ENCODE measurements at regions of chr1 and their contacts with region 1.

Region 1: GRCh38 chr1:165630629-165631341 is at the start of gene MGST3:
- DNase-seq: peak; percentile 97 to 99
- ATAC-seq: peak; percentile 92 to 96 (median 93)
- H3K4me3 ChIP-seq: peak within 1 kb of the TSS; percentile 95
- H3K27ac ChIP-seq: peak within 1 kb of the TSS; percentile 99
- H3K4me1 ChIP-seq: peaks cover 37% of the 10 kb centered on the region
- H3K27me3 ChIP-seq: no peaks in the 10 kb centered on the region
- CTCF ChIP-seq: no peak
- total RNA-seq, gene MGST3: 223 to 318 (median 258) TPM

Region 2: GRCh38 chr1:165376041-165376810 is 254.6 kb before region 1 on chr1:
- intact Hi-C with region 1: no loop called
- DNase-seq: peak; percentile 88 to 92
- ATAC-seq: peak; percentile 82 to 88 (median 88)
- H3K4me3 ChIP-seq: peak overlapping the region; percentile 63
- H3K27ac ChIP-seq: peak overlapping the region; percentile 73
- H3K4me1 ChIP-seq: peaks cover 10% of the 10 kb centered on the region
- H3K27me3 ChIP-seq: peaks cover 0 to 5% (median 0%) of the 10 kb centered on the region in 3 donors
- CTCF ChIP-seq: no peak

Region 3: DNA sequence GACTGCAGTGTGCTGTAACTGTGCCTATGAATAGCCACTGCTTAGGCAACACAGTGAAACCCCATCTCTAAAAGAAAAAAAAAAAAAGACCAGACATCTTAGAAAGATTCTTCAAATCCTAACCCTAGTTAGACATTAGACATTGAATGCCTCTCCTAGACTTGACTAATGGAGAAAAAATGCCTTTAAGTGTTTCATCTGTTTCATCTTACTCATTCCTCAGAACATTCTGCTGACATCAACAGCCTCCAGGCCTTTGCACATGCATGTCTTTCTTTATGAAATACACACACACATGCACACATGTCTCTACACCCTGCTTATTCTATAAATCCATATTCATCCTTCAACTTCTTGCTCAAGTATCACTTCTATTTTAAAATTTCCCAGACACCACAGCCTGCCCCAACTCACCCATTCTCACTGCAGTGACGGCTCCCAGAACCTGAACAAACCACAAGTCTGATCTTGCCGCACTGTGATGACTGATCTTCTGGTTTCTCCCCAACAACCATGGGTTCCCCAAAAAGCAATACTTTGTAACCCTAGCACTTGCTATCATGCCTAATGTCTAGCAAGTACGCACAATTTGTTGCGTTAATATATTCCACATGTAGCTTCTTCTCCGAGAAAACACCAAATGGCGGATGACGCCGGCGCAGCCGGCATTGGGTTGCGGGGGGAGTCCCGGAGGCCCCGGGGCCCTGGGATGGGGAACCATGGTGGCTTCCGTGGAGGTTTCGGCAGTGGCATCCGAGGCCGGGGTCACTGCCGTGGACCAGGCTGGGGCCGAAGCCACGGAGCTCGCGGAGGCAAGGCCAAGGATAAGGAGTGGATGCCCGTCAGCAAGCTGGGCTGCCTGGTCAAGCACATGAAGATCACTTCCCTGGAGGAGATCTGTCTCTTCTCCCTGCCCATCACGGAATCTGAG is 49.6 kb before region 1 on chr1:
- intact Hi-C with region 1: no loop called
- DNase-seq: no peak
- ATAC-seq: no peak
- H3K4me3 ChIP-seq: no peak overlapping the region
- H3K27ac ChIP-seq: no peak overlapping the region
- H3K4me1 ChIP-seq: no peaks in the 10 kb centered on the region
- H3K27me3 ChIP-seq: no peaks in the 10 kb centered on the region
- CTCF ChIP-seq: no peak

Region 4: GRCh38 chr1:165659581-165659895 is 28.8 kb after region 1 on chr1:
- intact Hi-C with region 1: loop called in 1 of 2 experiments (anchors 1 kb)
- DNase-seq: no peak
- ATAC-seq: no peak
- H3K4me3 ChIP-seq: no peak overlapping the region
- H3K27ac ChIP-seq: no peak overlapping the region
- H3K4me1 ChIP-seq: no peaks in the 10 kb centered on the region
- H3K27me3 ChIP-seq: no peaks in the 10 kb centered on the region
- CTCF ChIP-seq: no peak

Region 5: GRCh38 chr1:165697881-165698760 is 67.3 kb after region 1 on chr1 and contains the start of gene ALDH9A1:
- intact Hi-C with region 1: loop called in 1 of 2 experiments (anchors 5 kb)
- DNase-seq: peak; percentile 93 to 94
- ATAC-seq: peak; percentile 90 to 94 (median 93)
- H3K4me3 ChIP-seq: peak within 1 kb of the TSS; percentile 77
- H3K27ac ChIP-seq: peak within 1 kb of the TSS; percentile 91
- H3K4me1 ChIP-seq: peaks cover 16% of the 10 kb centered on the region
- H3K27me3 ChIP-seq: no peaks in the 10 kb centered on the region
- CTCF ChIP-seq: peak; percentile 33
- total RNA-seq, gene ALDH9A1: 40.9 to 69.3 (median 49.9) TPM

Measured in psoas muscle (tissue), 8 donors.